ENCODE measurements at regions of chr10 and their contacts with region 1.

Region 1: DNA sequence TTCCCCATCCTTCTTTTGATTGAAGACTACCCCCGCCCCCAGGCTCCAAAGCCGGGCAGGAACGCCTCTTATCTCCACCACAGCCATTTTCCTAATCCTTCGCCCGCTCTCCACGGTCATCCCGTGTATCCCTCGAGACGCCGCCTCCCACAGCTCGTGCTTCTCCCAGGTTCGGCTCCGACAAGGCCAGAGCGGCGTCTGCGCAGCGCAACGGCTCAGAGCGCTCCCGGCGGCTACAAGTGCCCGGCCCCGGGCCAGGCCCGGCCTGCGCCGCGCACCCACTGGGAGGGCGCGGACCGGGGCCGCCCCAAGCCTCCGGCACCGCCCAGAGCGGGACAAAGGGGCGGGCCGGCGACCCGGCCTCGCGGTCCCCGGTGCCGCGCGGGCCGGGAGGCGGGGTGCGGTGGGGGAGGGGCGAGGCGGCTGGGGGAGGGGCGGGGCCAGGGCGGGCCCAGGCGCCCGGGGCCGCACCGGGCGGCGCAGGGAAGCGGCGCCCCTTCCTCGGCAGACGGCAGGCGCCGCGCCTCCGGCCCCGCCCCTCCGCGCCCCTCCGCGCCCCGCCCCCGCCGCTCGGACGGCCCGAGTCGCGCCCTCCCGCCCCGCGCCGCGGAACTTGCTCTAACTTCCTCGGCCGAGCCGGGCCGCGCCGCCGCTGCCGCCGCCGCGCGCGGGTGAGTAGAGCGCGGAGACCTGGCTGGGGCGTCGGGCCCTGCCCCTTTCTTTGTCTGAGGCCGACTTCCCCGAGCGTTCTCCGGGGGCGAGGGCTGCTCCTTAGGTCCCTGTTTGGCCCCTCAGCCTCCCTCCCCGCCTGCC is at the start of gene TSPAN14:
- DNase-seq: peak; percentile 50 to 90 (median 76)
- ATAC-seq: peak; percentile 61
- H3K4me3 ChIP-seq: peak within 1 kb of the TSS; percentile 97
- H3K4me3 Mint-ChIP-seq: peak within 1 kb of the TSS; percentile 95
- H3K27ac ChIP-seq: peak within 1 kb of the TSS; percentile 67 to 80
- H3K27ac Mint-ChIP-seq: peak within 1 kb of the TSS; percentile 92
- H3K4me1 ChIP-seq: peaks cover 47% of the 10 kb centered on the region
- H3K4me1 Mint-ChIP-seq: peaks cover 36% of the 10 kb centered on the region
- H3K27me3 ChIP-seq: no peaks in the 10 kb centered on the region
- H3K27me3 Mint-ChIP-seq: no peaks in the 10 kb centered on the region
- CTCF ChIP-seq: no peak
- total RNA-seq, gene TSPAN14: 167 to 168 TPM

Region 2: GRCh38 chr10:80464557-80465450 is 10.9 kb after region 1 on chr10:
- CTCF ChIA-PET with region 1: interaction called, 12 read pairs
- POLR2A ChIA-PET with region 1: interaction called, 176 read pairs
- intact Hi-C with region 1: loop called in 1 of 2 experiments (anchors 1 kb)
- DNase-seq: peak in 6 of 14 experiments; percentile 21 to 58 (median 47)
- ATAC-seq: no peak
- H3K4me3 ChIP-seq: peak overlapping the region; percentile 49
- H3K4me3 Mint-ChIP-seq: peak overlapping the region; percentile 85
- H3K27ac ChIP-seq: peak overlapping the region; percentile 85 to 91
- H3K27ac Mint-ChIP-seq: peak overlapping the region; percentile 92
- H3K4me1 ChIP-seq: peaks cover 100% of the 10 kb centered on the region
- H3K4me1 Mint-ChIP-seq: peaks cover 97% of the 10 kb centered on the region
- H3K27me3 ChIP-seq: no peaks in the 10 kb centered on the region
- H3K27me3 Mint-ChIP-seq: no peaks in the 10 kb centered on the region
- CTCF ChIP-seq: no peak

Region 3: GRCh38 chr10:80472234-80473095 is 18.6 kb after region 1 on chr10:
- CTCF ChIA-PET with region 1: interaction called, 12 read pairs
- POLR2A ChIA-PET with region 1: interaction called, 176 read pairs
- intact Hi-C with region 1: loop called in 1 of 2 experiments (anchors 1 kb)
- DNase-seq: peak in 3 of 14 experiments; percentile 65 to 77 (median 75)
- ATAC-seq: peak; percentile 65
- H3K4me3 ChIP-seq: peak overlapping the region; percentile 23
- H3K4me3 Mint-ChIP-seq: peak overlapping the region; percentile 84
- H3K27ac ChIP-seq: peak overlapping the region; percentile 46 to 48
- H3K27ac Mint-ChIP-seq: peak overlapping the region; percentile 92
- H3K4me1 ChIP-seq: peaks cover 98% of the 10 kb centered on the region
- H3K4me1 Mint-ChIP-seq: peaks cover 93% of the 10 kb centered on the region
- H3K27me3 ChIP-seq: no peaks in the 10 kb centered on the region
- H3K27me3 Mint-ChIP-seq: no peaks in the 10 kb centered on the region
- CTCF ChIP-seq: no peak

Region 4: DNA sequence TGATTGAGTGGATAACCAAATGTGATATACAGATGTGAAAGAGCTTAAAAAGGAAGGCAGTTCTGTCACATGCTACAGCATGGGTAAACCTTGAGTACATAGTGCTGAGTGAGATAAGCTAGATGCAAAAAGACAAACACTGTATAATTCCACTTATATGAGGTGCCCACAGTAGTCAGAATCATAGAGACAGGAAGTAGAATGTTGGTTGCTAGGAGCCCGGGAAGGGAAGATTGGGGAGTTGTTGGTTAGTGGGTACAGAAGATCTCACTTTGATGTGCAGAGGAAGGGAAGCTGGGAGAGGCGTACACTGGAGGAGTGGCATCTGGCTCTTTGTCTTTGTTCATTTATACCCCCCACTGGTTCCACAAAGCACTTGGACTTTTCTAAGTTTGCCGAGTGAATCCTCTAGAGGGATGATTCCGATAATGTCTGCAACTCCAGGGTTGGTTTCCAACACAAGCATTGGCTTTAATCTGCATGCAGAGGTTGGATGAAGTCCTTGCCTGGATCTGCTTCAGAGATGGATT is 39.7 kb after region 1 on chr10:
- CTCF ChIA-PET with region 1: interaction called, 250 read pairs
- POLR2A ChIA-PET with region 1: interaction called, 420 read pairs
- intact Hi-C with region 1: loop called in 1 of 2 experiments (anchors 5 kb)
- DNase-seq: peak in 4 of 14 experiments; percentile 49 to 65 (median 62)
- ATAC-seq: peak; percentile 74
- H3K4me3 ChIP-seq: no peak overlapping the region
- H3K4me3 Mint-ChIP-seq: peak overlapping the region; percentile 62
- H3K27ac ChIP-seq: peak overlapping the region; percentile 10 to 30
- H3K27ac Mint-ChIP-seq: peak overlapping the region; percentile 78
- H3K4me1 ChIP-seq: peaks cover 84% of the 10 kb centered on the region
- H3K4me1 Mint-ChIP-seq: peaks cover 99% of the 10 kb centered on the region
- H3K27me3 ChIP-seq: no peaks in the 10 kb centered on the region
- H3K27me3 Mint-ChIP-seq: no peaks in the 10 kb centered on the region
- CTCF ChIP-seq: no peak

Region 5: DNA sequence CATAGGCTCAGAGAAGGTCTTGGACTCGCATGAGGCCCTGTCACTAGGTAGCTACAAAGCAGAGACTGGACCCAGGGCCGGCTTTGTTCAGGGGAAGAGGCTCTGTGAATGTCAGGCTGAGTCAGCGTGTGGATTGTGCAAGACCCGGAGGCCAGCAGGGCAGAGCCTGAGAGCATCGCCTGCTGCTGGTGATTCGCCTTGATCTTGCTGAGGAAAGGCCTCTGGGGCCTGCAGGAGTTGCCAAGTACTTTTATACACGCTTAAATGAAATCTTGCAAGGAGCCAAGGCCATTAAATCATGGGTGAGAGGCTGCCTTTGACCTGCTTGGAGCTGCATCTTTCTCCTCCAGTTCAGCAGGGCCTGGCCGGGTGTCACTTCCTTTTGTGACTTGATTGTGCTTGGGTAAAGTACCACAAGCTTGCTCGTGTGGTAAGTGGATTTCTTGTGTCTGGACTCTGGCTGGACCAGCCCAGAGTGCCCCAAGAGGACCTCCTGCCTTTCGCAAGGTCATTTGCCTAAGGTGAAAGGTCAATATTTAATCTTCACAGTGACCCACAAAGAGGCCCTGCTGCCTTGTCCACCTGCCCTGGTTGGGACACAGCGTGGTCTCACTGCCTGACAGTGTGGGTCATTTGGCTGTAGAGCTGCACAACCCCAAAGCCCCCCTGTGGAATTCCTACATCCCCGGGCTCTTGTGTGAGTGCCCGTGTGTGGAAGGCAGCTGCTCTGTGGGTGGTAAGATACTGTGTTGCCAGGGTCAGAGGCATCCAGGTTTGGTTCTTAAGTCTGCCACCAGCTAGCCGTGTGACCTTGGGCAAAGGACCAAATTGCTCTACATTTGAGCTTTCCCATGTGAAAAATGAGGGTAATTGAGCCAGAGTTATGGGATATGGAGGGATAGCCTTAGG is 45.2 kb after region 1 on chr10:
- CTCF ChIA-PET with region 1: interaction called, 250 read pairs
- POLR2A ChIA-PET with region 1: interaction called, 420 read pairs
- intact Hi-C with region 1: loop called in 1 of 2 experiments (anchors 5 kb)
- DNase-seq: peak in 9 of 14 experiments; percentile 31 to 77 (median 49)
- ATAC-seq: peak; percentile 30
- H3K4me3 ChIP-seq: peak overlapping the region; percentile 10
- H3K4me3 Mint-ChIP-seq: peak overlapping the region; percentile 83
- H3K27ac ChIP-seq: peak overlapping the region; percentile 49 to 54
- H3K27ac Mint-ChIP-seq: peak overlapping the region; percentile 78
- H3K4me1 ChIP-seq: peaks cover 89% of the 10 kb centered on the region
- H3K4me1 Mint-ChIP-seq: peaks cover 100% of the 10 kb centered on the region
- H3K27me3 ChIP-seq: no peaks in the 10 kb centered on the region
- H3K27me3 Mint-ChIP-seq: no peaks in the 10 kb centered on the region
- CTCF ChIP-seq: no peak

Region 6: GRCh38 chr10:80772596-80772995 is 318.7 kb after region 1 on chr10:
- CTCF ChIA-PET with region 1: no interaction called
- POLR2A ChIA-PET with region 1: no interaction called
- intact Hi-C with region 1: no loop called
- DNase-seq: no peak
- ATAC-seq: no peak
- H3K4me3 ChIP-seq: no peak overlapping the region
- H3K4me3 Mint-ChIP-seq: no peak overlapping the region
- H3K27ac ChIP-seq: no peak overlapping the region
- H3K27ac Mint-ChIP-seq: no peak overlapping the region
- H3K4me1 ChIP-seq: no peaks in the 10 kb centered on the region
- H3K4me1 Mint-ChIP-seq: no peaks in the 10 kb centered on the region
- H3K27me3 ChIP-seq: peaks cover 2 to 5% of the 10 kb centered on the region in 2 experiments
- H3K27me3 Mint-ChIP-seq: peaks cover 44% of the 10 kb centered on the region
- CTCF ChIP-seq: no peak

Region 7: DNA sequence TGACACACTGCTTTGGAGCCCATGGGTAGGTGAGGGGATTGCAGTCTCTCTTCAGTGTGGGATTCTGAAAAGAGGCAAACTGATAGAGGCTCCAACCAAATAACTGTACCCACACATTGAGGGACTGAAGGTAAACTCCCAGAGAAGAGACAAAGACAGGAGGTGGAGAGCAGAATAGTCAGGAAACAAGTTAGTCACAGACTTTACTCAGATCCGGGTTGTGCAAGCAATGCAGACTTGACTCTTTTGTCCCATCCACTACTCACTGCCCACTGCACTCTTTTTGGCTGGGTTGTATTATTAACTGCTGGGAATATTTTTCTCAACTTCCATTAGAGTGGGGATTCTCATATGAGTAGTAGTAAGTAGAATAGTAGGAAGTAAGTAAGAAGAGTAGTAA is 1573.8 kb after region 1 on chr10:
- CTCF ChIA-PET with region 1: no interaction called
- POLR2A ChIA-PET with region 1: no interaction called
- intact Hi-C with region 1: no loop called
- DNase-seq: no peak
- ATAC-seq: no peak
- H3K4me3 ChIP-seq: no peak overlapping the region
- H3K4me3 Mint-ChIP-seq: no peak overlapping the region
- H3K27ac ChIP-seq: no peak overlapping the region
- H3K27ac Mint-ChIP-seq: no peak overlapping the region
- H3K4me1 ChIP-seq: no peaks in the 10 kb centered on the region
- H3K4me1 Mint-ChIP-seq: no peaks in the 10 kb centered on the region
- H3K27me3 ChIP-seq: no peaks in the 10 kb centered on the region
- H3K27me3 Mint-ChIP-seq: no peaks in the 10 kb centered on the region
- CTCF ChIP-seq: no peak

Measured in CD4-positive, alpha-beta T cell (primary cell).